ENCODE measurements at regions of chr3 and their contacts with region 1.

Region 1: DNA sequence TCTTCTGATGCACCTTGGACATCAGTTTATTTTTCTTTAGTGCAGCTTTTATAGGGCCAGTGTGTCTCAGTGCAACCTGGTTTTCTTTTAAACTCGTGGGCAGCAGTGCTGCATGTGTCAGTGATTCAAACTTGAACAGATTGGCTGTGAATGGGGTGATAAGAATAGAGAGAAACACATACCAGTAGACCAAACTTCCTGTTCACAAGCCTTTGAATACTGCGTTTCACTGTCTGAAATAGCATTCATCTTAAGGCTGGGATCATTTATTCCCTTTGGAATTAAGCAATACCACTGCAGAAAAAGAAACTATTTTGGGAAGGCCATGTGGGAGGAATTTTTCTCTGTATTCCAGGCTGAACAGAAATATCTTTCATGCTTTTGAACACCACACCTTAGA is 51.7 kb downstream of the PHLDB2 start:
- DNase-seq: no peak
- ATAC-seq: peak; percentile 49
- H3K4me3 ChIP-seq: no peak overlapping the region
- H3K27ac ChIP-seq: peak overlapping the region; percentile 96
- H3K4me1 ChIP-seq: peaks cover 57 to 98% of the 10 kb centered on the region in 2 experiments
- H3K27me3 ChIP-seq: no peaks in the 10 kb centered on the region
- CTCF ChIP-seq: no peak
- POLR2A ChIP-seq: no peak
- RAD21 ChIP-seq: no peak

Region 2: DNA sequence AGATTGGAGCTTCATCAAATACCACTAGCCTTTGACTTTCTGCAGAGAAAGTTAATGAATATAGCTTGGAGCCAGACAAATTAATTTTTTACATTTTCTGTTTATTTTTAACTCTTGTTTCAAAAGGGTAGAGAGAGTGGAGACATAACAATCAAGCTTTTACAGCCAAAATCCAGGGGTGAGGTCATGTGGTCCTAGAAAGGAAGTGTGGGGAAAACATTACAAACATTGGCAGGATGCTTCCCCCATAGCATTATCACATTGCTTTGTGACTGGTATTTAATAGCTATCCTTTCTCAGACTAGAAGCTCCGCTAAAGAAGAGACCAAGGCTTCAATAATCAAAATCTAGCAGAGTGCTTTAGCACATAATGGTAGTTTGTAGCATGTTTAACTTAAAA is 98.1 kb before region 1 on chr3:
- CTCF ChIA-PET with region 1: no interaction called
- POLR2A ChIA-PET with region 1: no interaction called
- RAD21 ChIA-PET with region 1: no interaction called
- intact Hi-C with region 1: no loop called
- DNase-seq: no peak
- ATAC-seq: no peak
- H3K4me3 ChIP-seq: no peak overlapping the region
- H3K27ac ChIP-seq: no peak overlapping the region
- H3K4me1 ChIP-seq: peaks cover 39 to 60% of the 10 kb centered on the region in 2 experiments
- H3K27me3 ChIP-seq: no peaks in the 10 kb centered on the region
- CTCF ChIP-seq: no peak
- POLR2A ChIP-seq: no peak
- RAD21 ChIP-seq: no peak

Region 3: DNA sequence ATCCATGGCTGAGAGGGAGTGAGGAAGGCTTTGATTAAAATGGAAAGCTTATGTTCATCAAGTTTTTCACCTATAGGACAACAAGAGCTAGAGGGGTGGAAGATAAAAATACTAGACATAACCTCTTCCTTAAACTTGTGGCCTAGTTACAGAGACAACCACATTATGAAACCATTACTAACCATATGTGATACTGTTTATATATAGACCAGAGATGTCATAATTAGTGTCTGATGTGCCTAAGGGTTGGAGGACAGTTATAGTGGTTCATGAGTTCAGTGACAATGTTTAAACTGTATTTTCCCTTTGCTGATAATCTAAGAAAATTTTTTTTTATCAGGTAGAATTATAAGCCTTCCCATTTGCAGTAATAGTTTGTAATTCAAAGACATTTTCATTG is 28.0 kb before region 1 on chr3:
- CTCF ChIA-PET with region 1: interaction called, 6 read pairs
- POLR2A ChIA-PET with region 1: interaction called, 5 read pairs
- RAD21 ChIA-PET with region 1: no interaction called
- intact Hi-C with region 1: loop called (anchors 1 kb)
- DNase-seq: no peak
- ATAC-seq: no peak
- H3K4me3 ChIP-seq: no peak overlapping the region
- H3K27ac ChIP-seq: no peak overlapping the region
- H3K4me1 ChIP-seq: peaks cover 0 to 4% of the 10 kb centered on the region in 2 experiments; a peak in 1 of 4 replicates
- H3K27me3 ChIP-seq: no peaks in the 10 kb centered on the region
- CTCF ChIP-seq: no peak
- POLR2A ChIP-seq: no peak
- RAD21 ChIP-seq: no peak

Region 4: DNA sequence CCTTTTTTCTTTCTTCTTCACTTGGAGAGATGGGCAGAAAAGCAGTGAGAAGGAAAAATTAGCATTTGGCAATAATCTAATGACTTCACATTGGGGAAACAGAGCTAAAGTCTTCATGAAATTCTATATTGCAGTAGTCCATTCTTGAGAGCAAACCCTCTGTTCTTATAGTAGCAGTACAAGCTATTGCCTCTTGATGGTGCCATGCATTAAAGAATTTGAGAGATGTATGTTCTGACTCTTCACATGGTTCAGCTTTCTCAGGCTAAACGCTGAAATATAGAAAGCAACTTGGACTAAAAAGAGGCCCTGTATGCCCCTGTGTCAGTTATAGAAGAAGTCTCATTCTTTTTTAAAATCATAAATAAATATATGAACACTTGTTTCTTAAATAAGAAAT is 15.7 kb before region 1 on chr3:
- CTCF ChIA-PET with region 1: interaction called, 5 read pairs
- POLR2A ChIA-PET with region 1: interaction called, 26 read pairs
- RAD21 ChIA-PET with region 1: no interaction called
- intact Hi-C with region 1: no loop called
- DNase-seq: peak; percentile 75
- ATAC-seq: peak; percentile 82
- H3K4me3 ChIP-seq: no peak overlapping the region
- H3K27ac ChIP-seq: peak overlapping the region; percentile 58
- H3K4me1 ChIP-seq: peaks cover 23 to 73% of the 10 kb centered on the region in 2 experiments; a peak in 3 of 4 replicates
- H3K27me3 ChIP-seq: no peaks in the 10 kb centered on the region
- CTCF ChIP-seq: peak in 2 of 3 experiments; percentile 64 to 81; a peak in 4 of 6 replicates
- POLR2A ChIP-seq: no peak
- RAD21 ChIP-seq: no peak

Region 5: GRCh38 chr3:111924283-111924682 is 13.5 kb after region 1 on chr3:
- CTCF ChIA-PET with region 1: no interaction called
- POLR2A ChIA-PET with region 1: interaction called, 152 read pairs
- RAD21 ChIA-PET with region 1: no interaction called
- intact Hi-C with region 1: no loop called
- DNase-seq: no peak
- ATAC-seq: no peak
- H3K4me3 ChIP-seq: no peak overlapping the region
- H3K27ac ChIP-seq: peak overlapping the region; percentile 96
- H3K4me1 ChIP-seq: peaks cover 69 to 95% of the 10 kb centered on the region in 2 experiments
- H3K27me3 ChIP-seq: no peaks in the 10 kb centered on the region
- CTCF ChIP-seq: no peak
- POLR2A ChIP-seq: no peak
- RAD21 ChIP-seq: no peak

Region 6: GRCh38 chr3:111929484-111929883 is 18.7 kb after region 1 on chr3:
- CTCF ChIA-PET with region 1: no interaction called
- POLR2A ChIA-PET with region 1: interaction called, 26 read pairs
- RAD21 ChIA-PET with region 1: no interaction called
- intact Hi-C with region 1: no loop called
- DNase-seq: no peak
- ATAC-seq: peak; percentile 57
- H3K4me3 ChIP-seq: no peak overlapping the region
- H3K27ac ChIP-seq: peak overlapping the region; percentile 96
- H3K4me1 ChIP-seq: peaks cover 74 to 98% of the 10 kb centered on the region in 2 experiments
- H3K27me3 ChIP-seq: no peaks in the 10 kb centered on the region
- CTCF ChIP-seq: no peak
- POLR2A ChIP-seq: peak; percentile 30
- RAD21 ChIP-seq: no peak

Region 7: DNA sequence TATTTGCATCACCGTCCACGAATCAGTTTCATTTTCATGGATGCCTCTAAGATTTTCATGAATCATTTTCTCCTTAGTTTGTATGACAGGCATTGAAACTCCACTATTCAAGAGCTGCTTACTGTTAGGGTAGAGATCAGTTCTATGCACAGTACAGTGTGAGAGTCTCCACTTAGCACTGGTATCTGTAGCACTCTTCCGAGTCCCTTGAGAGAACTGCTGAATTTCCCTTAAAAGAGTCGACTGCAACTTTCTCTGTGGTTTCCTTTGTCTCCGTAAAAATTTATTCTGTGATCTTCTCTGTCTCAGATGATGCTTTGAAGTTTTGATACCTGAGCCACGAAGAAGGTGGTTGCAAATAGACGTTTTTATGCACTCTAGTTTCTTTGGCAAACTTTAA is 1094.8 kb after region 1 on chr3:
- CTCF ChIA-PET with region 1: no interaction called
- POLR2A ChIA-PET with region 1: no interaction called
- RAD21 ChIA-PET with region 1: no interaction called
- intact Hi-C with region 1: no loop called
- DNase-seq: no peak
- ATAC-seq: no peak
- H3K4me3 ChIP-seq: no peak overlapping the region
- H3K27ac ChIP-seq: no peak overlapping the region
- H3K4me1 ChIP-seq: no peaks in the 10 kb centered on the region
- H3K27me3 ChIP-seq: no peaks in the 10 kb centered on the region
- CTCF ChIP-seq: no peak
- POLR2A ChIP-seq: no peak
- RAD21 ChIP-seq: no peak

Measured in HCT116 (cell line).